Activated CD4-positive, alpha-beta memory T cell treated with anti-CD3 and anti-CD28 coated beads, Interleukin-2, amount 10 ng/mL, durations not matched to agents 7 days and 5 days (primary cell): ENCODE measurements at regions of chr2 and their contacts with region 1.

Region 1: GRCh38 chr2:152635635-152636298 is 81.5 kb downstream of the PRPF40A start:
- DNase-seq: peak; percentile 68
- H3K4me3 Mint-ChIP-seq: no peak overlapping the region
- H3K27ac Mint-ChIP-seq: no peak overlapping the region
- H3K4me1 Mint-ChIP-seq: no peaks in the 10 kb centered on the region
- H3K27me3 Mint-ChIP-seq: peaks cover 1% of the 10 kb centered on the region

Region 2: GRCh38 chr2:152036611-152037469 is 598.9 kb before region 1 on chr2:
- CTCF ChIA-PET with region 1: interaction called, 24 read pairs
- POLR2A ChIA-PET with region 1: no interaction called
- DNase-seq: peak; percentile 61
- H3K4me3 Mint-ChIP-seq: no peak overlapping the region
- H3K27ac Mint-ChIP-seq: no peak overlapping the region
- H3K4me1 Mint-ChIP-seq: no peaks in the 10 kb centered on the region
- H3K27me3 Mint-ChIP-seq: peaks cover under 1% of the 10 kb centered on the region

Region 3: DNA sequence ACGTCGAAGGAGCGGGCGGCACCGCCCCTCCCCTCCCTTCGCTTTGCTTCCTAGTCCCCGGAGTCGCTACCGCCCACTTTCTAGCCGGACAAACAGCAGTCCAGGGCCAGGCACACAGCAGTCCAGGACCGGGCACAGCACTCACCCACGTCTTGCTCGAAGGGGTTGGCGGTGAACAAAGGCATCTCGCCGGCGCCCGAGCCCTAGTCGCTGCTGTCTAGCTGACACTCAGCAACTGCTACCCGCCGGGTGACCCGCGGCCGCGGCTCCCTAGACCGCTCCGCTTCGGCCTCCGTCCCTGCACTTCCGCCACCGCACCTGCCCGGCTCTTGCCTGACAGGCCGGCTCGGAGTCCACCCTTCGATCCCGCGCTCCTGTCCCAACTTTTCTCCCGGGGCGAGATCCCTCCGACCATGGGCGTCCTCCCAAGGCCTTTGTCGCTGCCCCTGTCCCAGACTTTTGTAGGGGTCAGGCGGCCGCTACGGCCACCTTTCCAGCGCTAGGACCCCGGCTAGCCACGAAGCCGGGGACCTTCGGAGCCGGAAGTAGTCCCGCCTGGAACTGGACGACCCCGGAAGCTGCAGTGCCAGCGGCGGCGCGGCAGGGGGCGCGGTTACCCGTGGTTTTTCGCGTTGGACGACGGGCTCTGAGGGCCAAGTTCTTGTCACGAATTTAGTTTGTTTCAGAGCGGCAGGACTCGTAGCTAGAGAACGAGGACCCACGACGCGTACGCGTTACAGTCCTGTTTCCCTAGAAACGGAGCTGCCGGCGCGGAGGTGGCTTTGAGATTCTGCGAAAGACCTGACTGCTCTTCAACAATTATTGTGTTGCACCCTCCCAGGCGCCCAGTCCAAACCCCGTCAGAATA is 460.1 kb before region 1 on chr2 and contains the start of gene STAM2:
- CTCF ChIA-PET with region 1: interaction called, 58 read pairs
- POLR2A ChIA-PET with region 1: interaction called, 8 read pairs
- DNase-seq: peak; percentile 93
- H3K4me3 Mint-ChIP-seq: peak within 1 kb of the TSS; percentile 98
- H3K27ac Mint-ChIP-seq: peak within 1 kb of the TSS; percentile 97
- H3K4me1 Mint-ChIP-seq: peaks cover 32% of the 10 kb centered on the region
- H3K27me3 Mint-ChIP-seq: peaks cover 6% of the 10 kb centered on the region
- total RNA-seq, gene STAM2: 13.8 to 16.2 TPM

Region 4: DNA sequence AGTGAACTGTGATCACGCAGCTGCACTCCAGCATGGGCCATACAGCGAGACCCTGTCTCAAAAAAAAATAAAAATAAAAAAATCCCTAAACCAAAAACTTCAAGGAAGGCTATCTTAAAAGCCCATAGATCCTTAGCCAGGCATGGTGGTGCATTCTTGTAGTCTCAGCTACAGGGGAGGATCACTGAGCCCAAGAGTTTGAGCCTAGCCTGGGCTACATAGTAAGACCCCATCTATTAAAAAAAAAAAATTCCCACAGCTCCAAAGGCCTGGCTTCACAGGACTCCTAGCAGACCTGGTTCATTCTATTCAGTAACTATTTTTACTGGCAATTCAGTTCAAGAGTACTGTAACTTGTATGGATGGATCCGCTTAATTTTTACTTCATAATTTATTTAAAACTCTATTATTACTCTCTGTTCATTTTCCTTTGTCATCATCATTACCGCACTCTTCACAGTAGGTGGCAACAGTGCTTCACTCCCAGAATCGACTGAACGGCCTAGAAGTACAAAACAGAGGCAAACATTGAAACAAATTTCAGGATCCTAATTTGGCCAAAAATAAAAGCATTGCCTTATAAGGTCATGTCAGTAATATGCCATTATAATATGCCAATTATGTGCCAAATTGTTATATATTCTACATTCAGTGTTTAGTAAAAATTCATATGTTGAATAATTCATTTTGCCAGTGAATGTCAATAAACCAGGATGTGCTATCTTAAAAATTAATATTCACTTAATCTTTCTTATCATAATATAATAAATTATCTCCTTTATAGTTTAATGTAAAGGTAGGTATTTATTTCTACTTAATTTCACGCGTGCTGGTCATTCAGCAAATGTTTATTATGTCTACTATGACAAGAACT is 445.9 kb before region 1 on chr2:
- CTCF ChIA-PET with region 1: interaction called, 15 read pairs
- POLR2A ChIA-PET with region 1: no interaction called
- DNase-seq: no peak
- H3K4me3 Mint-ChIP-seq: no peak overlapping the region
- H3K27ac Mint-ChIP-seq: no peak overlapping the region
- H3K4me1 Mint-ChIP-seq: peaks cover 4% of the 10 kb centered on the region
- H3K27me3 Mint-ChIP-seq: peaks cover 22% of the 10 kb centered on the region

Region 5: GRCh38 chr2:152648336-152648735 is 12.6 kb after region 1 on chr2:
- CTCF ChIA-PET with region 1: interaction called, 23 read pairs
- POLR2A ChIA-PET with region 1: interaction called, 4 read pairs
- DNase-seq: no peak
- H3K4me3 Mint-ChIP-seq: no peak overlapping the region
- H3K27ac Mint-ChIP-seq: no peak overlapping the region
- H3K4me1 Mint-ChIP-seq: no peaks in the 10 kb centered on the region
- H3K27me3 Mint-ChIP-seq: no peaks in the 10 kb centered on the region